Caco-2 (cell line): ENCODE measurements at regions of chr9 and their contacts with region 1.

Region 1: GRCh38 chr9:75265525-75265972 is 177.2 kb downstream of the OSTF1 start:
- DNase-seq: peak in 1 of 2 experiments; percentile 3
- H3K4me3 ChIP-seq: no peak overlapping the region
- H3K4me3 Mint-ChIP-seq: no peak overlapping the region
- H3K27ac Mint-ChIP-seq: no peak overlapping the region
- H3K4me1 ChIP-seq: no peaks in the 10 kb centered on the region
- H3K4me1 Mint-ChIP-seq: no peaks in the 10 kb centered on the region
- H3K27me3 ChIP-seq: no peaks in the 10 kb centered on the region
- H3K27me3 Mint-ChIP-seq: no peaks in the 10 kb centered on the region
- CTCF ChIP-seq: peak; percentile 20 to 38

Region 2: GRCh38 chr9:75101096-75101495 is 164.5 kb before region 1 on chr9:
- CTCF ChIA-PET with region 1: no interaction called
- POLR2A ChIA-PET with region 1: no interaction called
- intact Hi-C with region 1: no loop called
- DNase-seq: peak; percentile 45 to 47
- H3K4me3 ChIP-seq: no peak overlapping the region
- H3K4me3 Mint-ChIP-seq: peak overlapping the region; percentile 43
- H3K27ac Mint-ChIP-seq: no peak overlapping the region
- H3K4me1 ChIP-seq: no peaks in the 10 kb centered on the region
- H3K4me1 Mint-ChIP-seq: no peaks in the 10 kb centered on the region
- H3K27me3 ChIP-seq: no peaks in the 10 kb centered on the region
- H3K27me3 Mint-ChIP-seq: no peaks in the 10 kb centered on the region
- CTCF ChIP-seq: no peak

Region 3: DNA sequence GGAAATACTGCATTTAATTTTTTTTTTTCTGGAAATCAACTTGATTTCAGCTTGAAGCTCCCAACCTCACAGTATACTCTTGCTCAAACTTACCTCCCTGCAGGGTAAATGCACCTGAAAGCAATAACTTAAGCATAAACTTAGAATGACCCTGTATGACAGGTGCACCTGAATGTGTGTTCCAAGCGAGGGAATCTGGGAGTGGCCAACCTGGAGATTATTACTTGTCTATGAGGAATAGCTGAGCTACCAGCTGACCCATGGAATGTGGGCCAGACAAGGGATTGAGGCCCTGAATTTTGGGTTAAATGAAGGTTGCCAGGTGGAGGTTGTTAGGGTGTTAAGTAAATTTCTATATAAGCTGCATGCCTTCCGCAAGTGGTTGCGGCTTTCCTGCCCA is 36.7 kb before region 1 on chr9:
- CTCF ChIA-PET with region 1: no interaction called
- POLR2A ChIA-PET with region 1: no interaction called
- intact Hi-C with region 1: no loop called
- DNase-seq: no peak
- H3K4me3 ChIP-seq: no peak overlapping the region
- H3K4me3 Mint-ChIP-seq: no peak overlapping the region
- H3K27ac Mint-ChIP-seq: no peak overlapping the region
- H3K4me1 ChIP-seq: no peaks in the 10 kb centered on the region
- H3K4me1 Mint-ChIP-seq: no peaks in the 10 kb centered on the region
- H3K27me3 ChIP-seq: no peaks in the 10 kb centered on the region
- H3K27me3 Mint-ChIP-seq: no peaks in the 10 kb centered on the region
- CTCF ChIP-seq: no peak

Region 4: DNA sequence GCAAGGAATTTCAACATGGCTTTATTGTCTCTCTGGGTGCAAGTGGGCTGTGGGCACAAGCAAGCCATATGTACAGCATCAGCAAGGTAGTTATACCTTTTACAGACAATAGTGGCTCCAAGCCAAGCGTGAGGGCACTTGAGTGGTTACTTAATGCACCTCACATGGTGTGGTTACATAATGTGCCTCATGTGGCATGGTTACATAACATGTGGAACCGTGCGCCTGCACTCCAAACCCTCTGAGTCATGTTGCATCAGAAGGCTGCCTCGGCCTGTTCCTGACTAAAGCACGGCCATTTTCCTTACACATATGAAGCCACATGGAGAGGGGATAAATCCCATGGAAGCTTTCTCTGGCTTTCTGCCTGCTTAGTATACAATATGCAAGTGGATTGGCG is 26.4 kb before region 1 on chr9:
- CTCF ChIA-PET with region 1: no interaction called
- POLR2A ChIA-PET with region 1: no interaction called
- intact Hi-C with region 1: no loop called
- DNase-seq: no peak
- H3K4me3 ChIP-seq: no peak overlapping the region
- H3K4me3 Mint-ChIP-seq: no peak overlapping the region
- H3K27ac Mint-ChIP-seq: no peak overlapping the region
- H3K4me1 ChIP-seq: no peaks in the 10 kb centered on the region
- H3K4me1 Mint-ChIP-seq: no peaks in the 10 kb centered on the region
- H3K27me3 ChIP-seq: no peaks in the 10 kb centered on the region
- H3K27me3 Mint-ChIP-seq: no peaks in the 10 kb centered on the region
- CTCF ChIP-seq: no peak

Region 5: GRCh38 chr9:75282047-75282446 is 16.5 kb after region 1 on chr9:
- CTCF ChIA-PET with region 1: no interaction called
- POLR2A ChIA-PET with region 1: no interaction called
- intact Hi-C with region 1: no loop called
- DNase-seq: no peak
- H3K4me3 ChIP-seq: no peak overlapping the region
- H3K4me3 Mint-ChIP-seq: no peak overlapping the region
- H3K27ac Mint-ChIP-seq: no peak overlapping the region
- H3K4me1 ChIP-seq: no peaks in the 10 kb centered on the region
- H3K4me1 Mint-ChIP-seq: no peaks in the 10 kb centered on the region
- H3K27me3 ChIP-seq: no peaks in the 10 kb centered on the region
- H3K27me3 Mint-ChIP-seq: no peaks in the 10 kb centered on the region
- CTCF ChIP-seq: no peak

Region 6: DNA sequence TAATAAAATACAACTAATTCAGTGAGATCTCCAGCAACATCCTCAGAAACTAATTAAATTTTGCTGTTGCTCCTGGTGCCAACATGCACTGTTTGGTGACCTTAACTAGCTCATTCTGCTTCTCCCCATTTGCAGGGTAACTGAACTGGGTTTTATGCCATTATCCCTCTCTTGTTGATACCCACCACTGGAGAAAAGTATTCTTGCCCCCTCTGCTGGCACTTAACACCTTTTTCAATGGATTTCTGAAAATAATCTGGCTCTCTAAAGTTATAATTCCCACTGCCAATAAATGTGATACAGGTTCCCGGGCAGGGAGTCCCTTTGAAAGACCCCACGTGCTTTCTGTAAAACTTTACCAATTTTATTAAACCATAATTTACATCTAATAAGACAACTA is 217.0 kb after region 1 on chr9:
- CTCF ChIA-PET with region 1: interaction called, 3 read pairs
- POLR2A ChIA-PET with region 1: no interaction called
- intact Hi-C with region 1: loop called (anchors 2 kb)
- DNase-seq: no peak
- H3K4me3 ChIP-seq: no peak overlapping the region
- H3K4me3 Mint-ChIP-seq: no peak overlapping the region
- H3K27ac Mint-ChIP-seq: no peak overlapping the region
- H3K4me1 ChIP-seq: no peaks in the 10 kb centered on the region
- H3K4me1 Mint-ChIP-seq: no peaks in the 10 kb centered on the region
- H3K27me3 ChIP-seq: no peaks in the 10 kb centered on the region
- H3K27me3 Mint-ChIP-seq: peaks cover 4% of the 10 kb centered on the region
- CTCF ChIP-seq: no peak

Region 7: DNA sequence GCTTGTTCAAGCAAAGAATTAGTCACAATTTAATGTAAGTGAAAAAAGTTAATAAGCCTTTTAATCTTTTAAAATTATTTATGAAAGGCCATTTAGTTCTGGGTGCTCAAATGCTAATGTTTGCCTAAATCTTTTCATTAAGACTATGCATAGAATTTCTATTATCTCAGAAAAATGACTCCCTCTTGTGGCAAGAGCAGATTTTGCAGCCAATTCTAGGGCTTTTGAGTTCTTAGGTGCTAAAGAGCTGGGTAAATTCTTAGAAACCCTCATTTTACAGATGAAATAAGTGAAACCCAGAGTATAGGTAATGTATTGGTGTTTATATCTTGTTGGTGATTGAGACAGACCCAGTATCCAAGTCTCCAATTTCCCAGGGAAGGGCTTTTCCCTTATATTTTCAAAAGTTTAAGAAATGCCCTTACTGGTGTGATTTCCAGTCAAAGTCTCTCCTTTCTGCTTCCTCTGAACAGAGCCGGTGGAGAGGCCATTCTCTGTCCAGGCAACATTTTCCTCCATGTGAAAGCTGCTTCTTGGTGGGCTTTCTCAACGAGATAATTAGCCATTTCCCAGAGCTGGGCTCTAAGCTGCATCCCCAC is 600.8 kb after region 1 on chr9:
- CTCF ChIA-PET with region 1: no interaction called
- POLR2A ChIA-PET with region 1: no interaction called
- intact Hi-C with region 1: loop called (anchors 10 kb)
- DNase-seq: peak in 1 of 2 experiments; percentile 15
- H3K4me3 ChIP-seq: no peak overlapping the region
- H3K4me3 Mint-ChIP-seq: no peak overlapping the region
- H3K27ac Mint-ChIP-seq: no peak overlapping the region
- H3K4me1 ChIP-seq: no peaks in the 10 kb centered on the region
- H3K4me1 Mint-ChIP-seq: no peaks in the 10 kb centered on the region
- H3K27me3 ChIP-seq: no peaks in the 10 kb centered on the region
- H3K27me3 Mint-ChIP-seq: no peaks in the 10 kb centered on the region
- CTCF ChIP-seq: peak in 1 of 2 experiments; percentile 57